B cell (primary cell): ENCODE measurements at regions of chr19 and their contacts with region 1.

Region 1: GRCh38 chr19:35279985-35280821 is 2.1 kb upstream of the HAMP start:
- DNase-seq: peak; percentile 59
- ATAC-seq: peak; percentile 36
- H3K4me3 ChIP-seq: no peak overlapping the region
- H3K4me3 Mint-ChIP-seq: peak overlapping the region; percentile 10
- H3K27ac ChIP-seq: peak overlapping the region in 1 of 2 donors; percentile 30
- H3K27ac Mint-ChIP-seq: peak overlapping the region; percentile 43
- H3K4me1 ChIP-seq: peaks cover 38 to 42% of the 10 kb centered on the region in 2 donors
- H3K4me1 Mint-ChIP-seq: peaks cover 47% of the 10 kb centered on the region
- H3K27me3 ChIP-seq: no peaks in the 10 kb centered on the region
- H3K27me3 Mint-ChIP-seq: no peaks in the 10 kb centered on the region
- CTCF ChIP-seq: no peak

Region 2: DNA sequence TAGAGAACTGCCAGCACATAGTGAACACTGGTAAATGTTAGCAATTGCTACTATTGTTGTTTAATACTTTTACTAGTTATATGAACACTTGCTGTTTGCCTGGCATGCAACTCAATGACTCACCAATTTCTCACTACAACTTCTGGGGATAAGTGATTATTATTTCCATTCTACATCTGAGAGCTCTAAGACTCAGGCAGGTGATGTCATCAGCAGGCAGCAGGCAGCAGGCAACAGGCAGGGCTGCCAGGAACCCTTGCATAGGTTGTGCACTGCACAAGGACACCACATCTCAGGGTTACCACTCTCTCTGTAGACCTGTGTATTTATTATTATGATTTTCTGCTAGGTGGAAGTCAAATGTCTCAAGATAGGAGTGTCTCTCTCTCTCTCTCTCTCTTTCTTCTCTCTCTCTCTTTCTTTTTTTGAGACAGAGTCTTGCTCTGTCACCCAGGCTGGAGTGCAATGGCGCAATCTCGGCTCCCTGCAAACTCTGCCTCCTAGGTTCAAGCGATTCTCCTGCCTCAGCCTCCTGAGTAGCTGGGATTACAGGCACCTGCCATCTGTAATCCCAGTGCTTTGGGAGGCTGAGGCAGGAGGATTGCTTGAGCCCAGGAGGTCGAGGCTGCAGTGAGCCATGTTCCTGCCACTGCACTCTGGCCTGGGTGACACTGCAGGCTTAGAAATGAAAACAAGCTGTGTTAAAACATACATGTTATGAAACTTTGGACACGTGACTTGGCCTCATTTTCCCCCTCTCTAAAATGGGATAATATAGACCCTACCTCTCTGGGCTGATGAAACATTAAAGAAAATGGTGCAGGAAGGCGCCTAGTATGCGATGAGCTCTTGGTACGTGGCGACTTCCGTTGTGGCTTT is 216.0 kb before region 1 on chr19:
- CTCF ChIA-PET with region 1: no interaction called
- POLR2A ChIA-PET with region 1: no interaction called
- intact Hi-C with region 1: no loop called
- DNase-seq: no peak
- ATAC-seq: no peak
- H3K4me3 ChIP-seq: no peak overlapping the region
- H3K4me3 Mint-ChIP-seq: no peak overlapping the region
- H3K27ac ChIP-seq: no peak overlapping the region
- H3K27ac Mint-ChIP-seq: no peak overlapping the region
- H3K4me1 ChIP-seq: peaks cover 4 to 18% of the 10 kb centered on the region in 2 donors
- H3K4me1 Mint-ChIP-seq: peaks cover 22% of the 10 kb centered on the region
- H3K27me3 ChIP-seq: no peaks in the 10 kb centered on the region
- H3K27me3 Mint-ChIP-seq: no peaks in the 10 kb centered on the region
- CTCF ChIP-seq: no peak

Region 3: GRCh38 chr19:35184884-35185283 is 95.3 kb before region 1 on chr19:
- CTCF ChIA-PET with region 1: no interaction called
- POLR2A ChIA-PET with region 1: no interaction called
- intact Hi-C with region 1: no loop called
- DNase-seq: no peak
- ATAC-seq: no peak
- H3K4me3 ChIP-seq: no peak overlapping the region
- H3K4me3 Mint-ChIP-seq: no peak overlapping the region
- H3K27ac ChIP-seq: no peak overlapping the region
- H3K27ac Mint-ChIP-seq: no peak overlapping the region
- H3K4me1 ChIP-seq: no peaks in the 10 kb centered on the region
- H3K4me1 Mint-ChIP-seq: peaks cover under 1% of the 10 kb centered on the region
- H3K27me3 ChIP-seq: no peaks in the 10 kb centered on the region
- H3K27me3 Mint-ChIP-seq: no peaks in the 10 kb centered on the region
- CTCF ChIP-seq: no peak

Region 4: GRCh38 chr19:35318650-35319448 is 38.6 kb after region 1 on chr19:
- CTCF ChIA-PET with region 1: no interaction called
- POLR2A ChIA-PET with region 1: no interaction called
- intact Hi-C with region 1: loop called (anchors 5 kb)
- DNase-seq: peak; percentile 65
- ATAC-seq: peak; percentile 25
- H3K4me3 ChIP-seq: peak overlapping the region in 1 of 5 experiments; percentile 53
- H3K4me3 Mint-ChIP-seq: peak overlapping the region; percentile 75
- H3K27ac ChIP-seq: peak overlapping the region; percentile 94 to 97
- H3K27ac Mint-ChIP-seq: peak overlapping the region; percentile 91
- H3K4me1 ChIP-seq: peaks cover 81 to 97% of the 10 kb centered on the region in 2 donors
- H3K4me1 Mint-ChIP-seq: peaks cover 85% of the 10 kb centered on the region
- H3K27me3 ChIP-seq: no peaks in the 10 kb centered on the region
- H3K27me3 Mint-ChIP-seq: no peaks in the 10 kb centered on the region
- CTCF ChIP-seq: no peak

Region 5: DNA sequence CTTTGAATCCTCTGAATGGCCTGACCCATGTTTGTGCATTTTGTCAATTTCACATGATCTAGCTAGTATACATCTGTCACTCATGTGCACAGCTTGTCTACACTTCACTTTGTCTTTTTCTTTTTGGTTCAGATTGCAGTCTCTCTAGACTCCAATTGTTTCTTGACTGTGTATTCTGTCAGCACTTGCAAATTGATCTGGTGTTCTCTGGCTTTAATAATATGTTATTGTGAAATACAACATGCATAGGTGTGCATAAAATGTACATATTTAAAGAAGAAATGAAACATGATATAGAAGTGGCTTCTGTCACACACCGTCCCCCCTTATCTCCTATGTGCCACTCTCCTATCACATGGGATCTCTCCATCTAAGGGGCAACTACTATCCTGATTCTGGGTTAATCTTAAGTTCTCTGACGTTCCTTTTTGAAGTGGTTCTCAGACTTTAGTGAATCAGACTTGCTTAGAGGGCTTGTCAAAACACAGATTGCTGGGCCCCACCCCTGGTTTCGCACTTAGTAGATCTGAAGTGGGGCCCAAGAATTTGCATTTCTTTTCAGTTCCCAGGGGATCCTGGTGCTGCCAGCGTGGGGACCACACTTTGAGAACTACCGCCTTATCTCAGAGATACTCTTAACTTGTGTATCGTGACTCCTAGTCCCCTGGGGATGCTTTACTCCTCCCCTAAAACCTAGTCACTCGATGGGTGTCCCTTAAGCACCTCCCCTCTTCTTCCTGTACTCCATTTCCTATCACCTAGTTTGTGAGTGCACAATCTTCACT is 204.2 kb after region 1 on chr19:
- CTCF ChIA-PET with region 1: no interaction called
- POLR2A ChIA-PET with region 1: interaction called, 10 read pairs
- intact Hi-C with region 1: no loop called
- DNase-seq: peak; percentile 82
- ATAC-seq: peak; percentile 98
- H3K4me3 ChIP-seq: peak overlapping the region in 2 of 5 experiments; percentile 2 to 18
- H3K4me3 Mint-ChIP-seq: peak overlapping the region; percentile 56
- H3K27ac ChIP-seq: no peak overlapping the region
- H3K27ac Mint-ChIP-seq: no peak overlapping the region
- H3K4me1 ChIP-seq: peaks cover 19 to 20% of the 10 kb centered on the region in 2 donors
- H3K4me1 Mint-ChIP-seq: peaks cover 14% of the 10 kb centered on the region
- H3K27me3 ChIP-seq: no peaks in the 10 kb centered on the region
- H3K27me3 Mint-ChIP-seq: no peaks in the 10 kb centered on the region
- CTCF ChIP-seq: no peak

Region 6: GRCh38 chr19:35775298-35776110 is 495.3 kb after region 1 on chr19 and contains the start of gene ARHGAP33:
- CTCF ChIA-PET with region 1: no interaction called
- POLR2A ChIA-PET with region 1: no interaction called
- intact Hi-C with region 1: no loop called
- DNase-seq: peak; percentile 99
- ATAC-seq: peak; percentile 99
- H3K4me3 ChIP-seq: peak within 1 kb of the TSS; percentile 26 to 68 (median 58)
- H3K4me3 Mint-ChIP-seq: peak within 1 kb of the TSS; percentile 86
- H3K27ac ChIP-seq: peak within 1 kb of the TSS in 1 of 2 donors; percentile 19
- H3K27ac Mint-ChIP-seq: peak within 1 kb of the TSS; percentile 43
- H3K4me1 ChIP-seq: peaks cover 10 to 16% of the 10 kb centered on the region in 2 donors
- H3K4me1 Mint-ChIP-seq: peaks cover 10% of the 10 kb centered on the region
- H3K27me3 ChIP-seq: no peaks in the 10 kb centered on the region
- H3K27me3 Mint-ChIP-seq: no peaks in the 10 kb centered on the region
- CTCF ChIP-seq: no peak
- total RNA-seq, gene ARHGAP33: 18.2 and 21.6 TPM in 2 replicates